ENCODE measurements at regions of chr2 and their contacts with region 1.

Region 1: GRCh38 chr2:119688616-119689015 is 9.6 kb downstream of the TMEM177 start:
- DNase-seq: peak; percentile 63

Region 2: GRCh38 chr2:119106301-119106897 is 582.2 kb before region 1 on chr2:
- intact Hi-C with region 1: no loop called
- DNase-seq: no peak

Region 3: DNA sequence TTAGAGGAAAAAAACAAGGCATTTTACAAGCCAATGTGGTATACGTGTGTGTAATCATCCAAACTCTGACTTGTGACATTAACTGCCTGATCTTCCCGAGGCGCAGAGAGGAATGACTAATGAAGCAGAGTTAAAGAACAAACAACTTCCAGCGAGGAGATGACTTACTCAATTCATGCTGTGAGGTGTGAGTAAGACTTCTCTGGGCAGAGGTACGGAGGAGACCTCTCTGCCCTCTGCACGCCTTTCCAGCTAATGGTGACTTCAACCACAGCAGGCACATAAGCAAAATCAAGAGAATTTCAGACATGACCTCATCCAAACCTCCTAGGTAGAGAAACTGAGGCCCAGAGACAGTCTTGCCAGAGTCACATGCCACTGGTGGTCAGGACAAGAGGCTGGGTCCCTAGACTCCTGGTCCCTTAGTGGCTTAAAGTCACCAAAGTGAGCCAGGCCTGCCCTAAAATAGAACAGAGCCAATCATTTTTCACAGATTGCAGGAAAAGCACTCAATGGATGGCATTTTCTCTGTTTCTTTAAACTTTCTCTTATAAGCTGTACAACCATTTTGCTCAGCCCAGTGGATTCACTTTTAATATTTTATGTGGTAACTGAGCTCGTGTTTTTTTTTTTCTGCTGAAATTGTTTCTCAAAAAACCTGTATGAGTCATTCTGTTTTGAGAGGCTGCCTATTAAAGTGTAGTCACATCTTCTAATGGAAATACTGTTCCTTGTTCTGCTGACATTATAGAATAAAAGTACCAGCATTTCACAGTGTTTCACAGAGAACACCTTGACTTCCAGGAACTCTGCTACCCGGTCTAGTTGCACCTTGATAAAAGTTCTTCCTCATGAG is 435.5 kb before region 1 on chr2:
- intact Hi-C with region 1: loop called in 1 of 2 experiments (anchors 5 kb)
- DNase-seq: no peak

Region 4: GRCh38 chr2:119782308-119783027 is 93.9 kb after region 1 on chr2:
- intact Hi-C with region 1: no loop called
- DNase-seq: no peak